Endothelial cell of umbilical vein (primary cell): ENCODE measurements at regions of chr7 and their contacts with region 1.

Region 1: DNA sequence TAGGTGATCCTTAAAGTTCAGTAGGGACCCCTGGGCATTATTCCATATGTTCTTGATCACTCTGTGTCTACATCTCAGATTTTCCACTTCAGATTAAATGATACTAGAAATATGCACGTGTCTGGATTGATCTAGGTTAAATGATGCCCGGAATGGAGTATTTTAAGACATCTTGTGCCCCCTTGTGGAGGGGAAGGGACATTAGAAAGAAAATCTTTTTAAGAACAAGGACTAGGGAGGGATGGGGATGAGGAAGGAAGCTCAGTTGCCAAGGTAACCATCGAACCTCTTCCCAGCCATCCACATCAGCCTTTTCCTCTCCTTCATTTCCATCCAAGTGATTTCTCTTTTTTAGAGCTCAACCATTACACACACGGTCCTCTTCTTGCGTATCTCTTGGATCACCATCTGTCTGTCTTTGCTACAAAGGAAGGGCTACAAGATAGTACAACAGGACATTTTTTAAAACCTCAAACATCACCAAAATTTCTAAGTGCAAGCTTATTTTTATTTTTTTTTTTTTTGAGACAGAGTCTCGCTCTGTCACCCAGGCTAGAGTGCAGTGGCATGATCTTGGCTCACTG is 40.5 kb downstream of the PRSS2 start:
- DNase-seq: peak; percentile 63
- H3K4me3 ChIP-seq: no peak overlapping the region
- H3K27ac ChIP-seq: no peak overlapping the region
- H3K4me1 ChIP-seq: peaks cover 50% of the 10 kb centered on the region
- H3K27me3 ChIP-seq: no peaks in the 10 kb centered on the region
- CTCF ChIP-seq: peak; percentile 39 to 59
- POLR2A ChIP-seq: no peak

Region 2: DNA sequence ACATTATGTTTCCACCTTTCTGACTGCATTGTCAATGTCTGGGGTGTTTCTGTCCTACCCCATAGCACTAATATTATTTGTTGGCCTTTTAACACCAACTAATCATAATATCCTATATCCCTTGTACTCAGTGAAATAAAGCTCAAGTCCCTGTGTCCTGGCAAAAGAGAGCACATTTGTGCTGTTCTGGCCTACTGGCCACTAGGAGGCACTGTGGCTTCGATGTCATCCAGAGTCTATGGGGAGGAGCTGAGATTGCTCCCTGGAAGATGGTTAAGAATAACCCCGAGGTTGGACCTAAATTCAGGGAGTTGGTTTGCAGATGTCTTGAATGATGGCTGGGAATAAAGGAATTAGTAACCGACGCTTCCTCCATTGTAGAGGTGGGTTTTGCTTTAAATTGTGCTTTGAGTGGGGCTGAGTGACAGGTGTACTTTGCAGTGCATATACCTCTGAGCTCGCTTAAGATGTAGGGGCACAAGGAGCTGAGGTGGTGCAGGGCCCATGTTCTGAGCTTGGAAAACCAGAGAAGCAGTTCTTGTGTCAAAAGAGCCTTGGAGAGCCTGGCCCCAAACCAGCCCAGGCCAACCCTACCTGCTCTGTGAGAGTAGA is 253.2 kb before region 1 on chr7:
- CTCF ChIA-PET with region 1: interaction called, 17 read pairs
- POLR2A ChIA-PET with region 1: no interaction called
- dilution Hi-C with region 1: no loop called
- intact Hi-C with region 1: loop called (anchors 1 kb)
- DNase-seq: peak; percentile 48
- H3K4me3 ChIP-seq: no peak overlapping the region
- H3K27ac ChIP-seq: peak overlapping the region; percentile 70
- H3K4me1 ChIP-seq: peaks cover 40% of the 10 kb centered on the region
- H3K27me3 ChIP-seq: no peaks in the 10 kb centered on the region
- CTCF ChIP-seq: peak; percentile 62 to 89
- POLR2A ChIP-seq: no peak

Region 3: DNA sequence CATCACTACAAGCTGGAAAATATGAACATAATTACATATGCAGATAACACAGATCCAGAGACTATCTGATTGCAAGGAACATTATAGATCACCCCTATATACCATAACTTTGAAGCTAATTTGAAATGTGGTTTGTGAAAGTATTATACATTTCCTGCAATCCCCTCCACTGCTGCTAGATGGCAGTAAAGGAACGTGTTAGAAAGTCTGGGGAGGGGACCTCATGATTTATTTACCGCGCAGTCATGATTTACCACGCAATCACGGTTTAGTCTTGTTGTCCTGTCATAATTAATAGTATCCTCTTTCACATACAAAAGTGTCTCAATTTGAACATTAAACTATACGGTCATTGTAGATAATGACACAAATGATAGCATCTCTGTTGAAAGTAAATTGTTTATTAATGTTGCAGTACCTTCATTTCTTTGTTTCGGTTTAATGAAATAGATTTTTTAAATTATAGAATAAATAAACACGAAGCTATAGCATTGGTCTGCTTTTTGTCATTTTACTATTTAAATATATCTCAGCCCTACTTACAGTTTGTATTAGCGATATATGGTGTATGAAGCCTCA is 207.3 kb before region 1 on chr7:
- CTCF ChIA-PET with region 1: interaction called, 43 read pairs
- POLR2A ChIA-PET with region 1: no interaction called
- dilution Hi-C with region 1: no loop called
- intact Hi-C with region 1: loop called (anchors 1 kb)
- DNase-seq: peak; percentile 71
- H3K4me3 ChIP-seq: peak overlapping the region in 2 of 3 experiments; percentile 45 to 68
- H3K27ac ChIP-seq: no peak overlapping the region
- H3K4me1 ChIP-seq: peaks cover 7% of the 10 kb centered on the region
- H3K27me3 ChIP-seq: no peaks in the 10 kb centered on the region
- CTCF ChIP-seq: peak; percentile 67 to 75
- POLR2A ChIP-seq: no peak

Region 4: DNA sequence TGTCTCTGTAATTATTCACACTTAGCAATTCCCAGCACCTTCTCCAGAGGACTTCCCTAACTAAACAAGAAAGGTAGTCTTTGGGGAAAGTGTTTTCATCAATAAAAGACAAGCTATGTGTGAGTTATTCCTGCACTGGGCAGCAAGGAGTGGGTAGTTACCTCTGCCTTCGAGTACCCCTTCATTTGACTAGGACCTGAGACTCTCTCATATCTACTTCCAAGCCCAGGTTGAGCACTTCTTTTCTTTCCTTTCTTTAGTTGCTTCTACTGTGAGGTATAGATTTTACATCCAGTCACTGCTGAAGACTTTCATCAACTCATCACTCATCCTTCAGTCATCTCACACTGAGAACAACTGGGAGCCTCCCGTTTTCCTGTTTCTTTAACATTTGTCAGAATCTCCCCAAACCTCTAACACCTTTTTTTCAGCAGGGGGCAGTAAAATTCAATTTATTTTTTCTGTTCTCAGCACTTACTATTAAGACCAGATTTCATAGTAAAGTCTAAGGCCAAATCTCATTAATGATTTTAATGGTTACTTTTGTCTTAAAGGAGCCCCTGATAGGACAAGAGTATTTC is 142.1 kb before region 1 on chr7:
- CTCF ChIA-PET with region 1: interaction called, 17 read pairs
- POLR2A ChIA-PET with region 1: no interaction called
- dilution Hi-C with region 1: no loop called
- intact Hi-C with region 1: loop called (anchors 1 kb)
- DNase-seq: peak; percentile 53
- H3K4me3 ChIP-seq: no peak overlapping the region
- H3K27ac ChIP-seq: no peak overlapping the region
- H3K4me1 ChIP-seq: no peaks in the 10 kb centered on the region
- H3K27me3 ChIP-seq: peaks cover 2 to 4% of the 10 kb centered on the region in 2 experiments
- CTCF ChIP-seq: peak; percentile 8 to 27
- POLR2A ChIP-seq: no peak

Region 5: GRCh38 chr7:142771353-142771723 is 39.9 kb before region 1 on chr7:
- CTCF ChIA-PET with region 1: interaction called, 6 read pairs
- POLR2A ChIA-PET with region 1: interaction called, 3 read pairs
- dilution Hi-C with region 1: no loop called
- intact Hi-C with region 1: loop called (anchors 1 kb)
- DNase-seq: no peak
- H3K4me3 ChIP-seq: no peak overlapping the region
- H3K27ac ChIP-seq: no peak overlapping the region
- H3K4me1 ChIP-seq: peaks cover 8% of the 10 kb centered on the region
- H3K27me3 ChIP-seq: peaks cover 11 to 31% of the 10 kb centered on the region in 2 experiments
- CTCF ChIP-seq: no peak
- POLR2A ChIP-seq: no peak

Region 6: GRCh38 chr7:143391462-143392404 is 580.5 kb after region 1 on chr7:
- CTCF ChIA-PET with region 1: no interaction called
- POLR2A ChIA-PET with region 1: no interaction called
- dilution Hi-C with region 1: no loop called
- intact Hi-C with region 1: loop called (anchors 5 kb)
- DNase-seq: peak; percentile 84
- H3K4me3 ChIP-seq: no peak overlapping the region
- H3K27ac ChIP-seq: peak overlapping the region; percentile 88
- H3K4me1 ChIP-seq: peaks cover 79% of the 10 kb centered on the region
- H3K27me3 ChIP-seq: no peaks in the 10 kb centered on the region
- CTCF ChIP-seq: no peak
- POLR2A ChIP-seq: peak; percentile 58

Region 7: GRCh38 chr7:144137501-144137900 is 1326.3 kb after region 1 on chr7:
- CTCF ChIA-PET with region 1: no interaction called
- POLR2A ChIA-PET with region 1: no interaction called
- dilution Hi-C with region 1: no loop called
- intact Hi-C with region 1: no loop called
- DNase-seq: no peak
- H3K4me3 ChIP-seq: no peak overlapping the region
- H3K27ac ChIP-seq: no peak overlapping the region
- H3K4me1 ChIP-seq: no peaks in the 10 kb centered on the region
- H3K27me3 ChIP-seq: peaks cover 2% of the 10 kb centered on the region in 2 experiments
- CTCF ChIP-seq: no peak
- POLR2A ChIP-seq: no peak